Activated naive CD4-positive, alpha-beta T cell treated with anti-CD3 and anti-CD28 coated beads, Interleukin-2, amount 10 ng/mL, durations not matched to agents 7 days and 5 days (primary cell): ENCODE measurements at regions of chr3 and their contacts with region 1.

Region 1: GRCh38 chr3:33636125-33636850 is 81.8 kb downstream of the CLASP2 start:
- DNase-seq: no peak
- H3K4me3 Mint-ChIP-seq: no peak overlapping the region
- H3K27ac Mint-ChIP-seq: no peak overlapping the region
- H3K4me1 Mint-ChIP-seq: peaks cover 3% of the 10 kb centered on the region
- H3K27me3 Mint-ChIP-seq: no peaks in the 10 kb centered on the region

Region 2: DNA sequence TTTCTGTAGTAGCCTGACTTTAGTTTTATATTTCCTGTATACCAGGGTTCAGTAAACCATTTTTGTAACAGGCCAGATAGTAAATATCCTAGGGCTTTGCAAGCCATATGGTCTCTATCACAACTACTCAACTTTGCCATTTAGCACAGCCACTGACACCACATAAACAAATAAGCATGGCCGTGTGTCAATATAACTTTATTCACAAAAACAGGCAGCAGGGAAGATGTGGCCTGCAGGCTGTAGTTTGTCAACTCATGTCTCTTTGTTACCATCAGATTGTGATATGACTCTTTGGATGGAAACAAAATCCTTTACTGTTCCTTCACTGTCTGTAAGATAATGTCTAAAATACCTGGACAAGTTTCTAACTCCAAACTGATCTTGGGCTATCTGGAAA is 72.8 kb before region 1 on chr3:
- CTCF ChIA-PET with region 1: no interaction called
- DNase-seq: no peak
- H3K4me3 Mint-ChIP-seq: no peak overlapping the region
- H3K27ac Mint-ChIP-seq: no peak overlapping the region
- H3K4me1 Mint-ChIP-seq: no peaks in the 10 kb centered on the region
- H3K27me3 Mint-ChIP-seq: no peaks in the 10 kb centered on the region

Region 3: DNA sequence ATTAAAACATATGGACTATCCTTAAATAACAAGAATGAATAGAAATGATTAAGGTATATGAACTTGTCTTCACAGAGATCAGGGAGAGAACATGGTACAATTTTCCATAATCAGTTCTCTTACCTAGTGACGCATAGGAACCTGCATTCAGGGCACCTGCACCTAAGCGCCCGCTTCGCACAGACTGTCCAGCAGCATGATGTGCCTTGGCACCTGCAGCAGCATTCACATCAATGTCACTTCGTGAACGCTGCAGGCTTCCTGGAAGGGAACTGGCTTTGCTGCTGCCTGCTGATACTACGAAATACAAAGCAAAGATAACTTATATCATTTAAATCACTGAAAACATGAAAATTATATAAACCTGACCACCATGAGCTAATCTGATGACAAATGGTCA is 33.5 kb before region 1 on chr3:
- CTCF ChIA-PET with region 1: no interaction called
- DNase-seq: no peak
- H3K4me3 Mint-ChIP-seq: no peak overlapping the region
- H3K27ac Mint-ChIP-seq: no peak overlapping the region
- H3K4me1 Mint-ChIP-seq: no peaks in the 10 kb centered on the region
- H3K27me3 Mint-ChIP-seq: no peaks in the 10 kb centered on the region

Region 4: DNA sequence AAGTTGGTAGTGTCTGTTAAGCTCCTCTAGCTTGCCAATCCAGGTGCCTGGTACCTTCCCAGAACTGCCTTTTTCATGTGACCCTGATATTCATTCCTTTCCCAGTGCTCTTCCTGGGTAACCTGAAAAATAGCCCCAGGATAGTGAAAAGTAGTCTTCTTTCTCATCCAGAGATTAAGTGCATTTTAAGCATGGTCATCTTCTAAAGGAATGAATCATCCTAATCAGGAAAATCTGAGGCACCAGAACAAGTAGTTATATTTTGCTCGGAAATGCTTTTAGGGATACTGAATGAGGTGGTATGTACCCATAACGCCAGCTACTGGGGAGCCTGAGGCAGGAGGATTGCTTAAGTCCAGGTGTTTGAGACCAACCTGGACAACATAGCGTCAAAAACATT is 139.1 kb after region 1 on chr3:
- CTCF ChIA-PET with region 1: interaction called, 21 read pairs
- DNase-seq: no peak
- H3K4me3 Mint-ChIP-seq: no peak overlapping the region
- H3K27ac Mint-ChIP-seq: no peak overlapping the region
- H3K4me1 Mint-ChIP-seq: no peaks in the 10 kb centered on the region
- H3K27me3 Mint-ChIP-seq: peaks cover 6% of the 10 kb centered on the region

Region 5: GRCh38 chr3:33787328-33788009 is 151.2 kb after region 1 on chr3:
- CTCF ChIA-PET with region 1: interaction called, 28 read pairs
- DNase-seq: peak; percentile 67
- H3K4me3 Mint-ChIP-seq: no peak overlapping the region
- H3K27ac Mint-ChIP-seq: no peak overlapping the region
- H3K4me1 Mint-ChIP-seq: peaks cover 4% of the 10 kb centered on the region
- H3K27me3 Mint-ChIP-seq: peaks cover 27% of the 10 kb centered on the region

Region 6: DNA sequence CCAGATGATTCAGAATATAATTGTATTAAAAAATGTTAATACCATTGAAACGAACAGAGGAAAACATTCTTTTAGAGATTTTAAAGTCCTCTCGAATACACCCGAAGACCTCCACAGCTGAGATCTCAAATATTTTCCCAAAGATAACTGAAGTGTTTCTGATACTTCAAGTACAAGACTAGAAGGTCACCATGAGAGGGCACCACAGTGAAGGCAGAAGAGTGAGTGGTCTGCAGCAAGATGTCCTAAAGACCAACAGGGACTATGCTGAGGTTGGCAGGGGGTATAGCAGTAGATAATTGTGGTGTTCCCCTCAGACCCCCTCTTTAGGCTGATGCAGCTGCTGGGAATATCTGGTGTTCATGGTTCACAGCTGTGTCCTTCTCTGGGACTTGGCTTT is 318.7 kb after region 1 on chr3:
- CTCF ChIA-PET with region 1: no interaction called
- DNase-seq: no peak
- H3K4me3 Mint-ChIP-seq: no peak overlapping the region
- H3K27ac Mint-ChIP-seq: no peak overlapping the region
- H3K4me1 Mint-ChIP-seq: no peaks in the 10 kb centered on the region
- H3K27me3 Mint-ChIP-seq: no peaks in the 10 kb centered on the region